Caco-2 (cell line): ENCODE measurements at regions of chr4 and their contacts with region 1.

Region 1: DNA sequence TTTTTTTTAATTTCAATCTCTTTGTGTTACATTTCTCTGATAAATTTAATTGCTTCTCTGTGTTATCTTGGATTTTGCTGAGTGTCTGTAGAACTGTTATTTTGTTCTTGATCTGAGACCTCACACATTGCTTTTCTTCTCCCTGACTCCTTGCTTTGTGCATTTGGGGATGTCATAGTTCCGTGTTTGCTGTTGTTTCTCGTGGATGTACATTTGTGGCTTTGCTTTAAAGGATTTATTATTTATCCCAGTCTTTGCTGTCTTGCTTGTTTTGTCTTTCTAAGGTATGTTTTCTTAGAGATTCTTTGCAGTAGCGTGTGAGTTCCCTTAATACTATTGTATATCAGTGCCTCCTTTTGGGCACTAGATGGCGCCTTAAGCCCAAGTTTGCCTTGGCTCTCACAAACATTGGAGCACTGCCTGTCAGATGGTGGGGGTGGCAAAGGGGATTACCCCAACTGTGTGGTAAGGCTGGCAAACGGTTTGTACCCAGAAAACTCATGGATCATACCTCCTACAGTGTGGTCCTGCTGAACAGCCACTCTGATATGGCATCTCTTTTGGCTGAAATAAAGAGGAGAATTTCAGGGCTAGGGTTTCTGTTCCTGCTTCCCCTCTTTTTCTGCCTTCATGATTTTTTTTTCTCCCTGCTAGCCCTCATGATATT is 96.4 kb downstream of the PGRMC2 start:
- DNase-seq: peak; percentile 59 to 65
- H3K4me3 ChIP-seq: no peak overlapping the region
- H3K4me3 Mint-ChIP-seq: no peak overlapping the region
- H3K27ac Mint-ChIP-seq: no peak overlapping the region
- H3K4me1 ChIP-seq: 0 out of 2 replicates have a peak, but pooled peaks cover 11% of the 10 kb centered on the region
- H3K4me1 Mint-ChIP-seq: peaks cover 15% of the 10 kb centered on the region
- H3K27me3 ChIP-seq: no peaks in the 10 kb centered on the region
- H3K27me3 Mint-ChIP-seq: no peaks in the 10 kb centered on the region
- CTCF ChIP-seq: peak; percentile 73 to 77

Region 2: DNA sequence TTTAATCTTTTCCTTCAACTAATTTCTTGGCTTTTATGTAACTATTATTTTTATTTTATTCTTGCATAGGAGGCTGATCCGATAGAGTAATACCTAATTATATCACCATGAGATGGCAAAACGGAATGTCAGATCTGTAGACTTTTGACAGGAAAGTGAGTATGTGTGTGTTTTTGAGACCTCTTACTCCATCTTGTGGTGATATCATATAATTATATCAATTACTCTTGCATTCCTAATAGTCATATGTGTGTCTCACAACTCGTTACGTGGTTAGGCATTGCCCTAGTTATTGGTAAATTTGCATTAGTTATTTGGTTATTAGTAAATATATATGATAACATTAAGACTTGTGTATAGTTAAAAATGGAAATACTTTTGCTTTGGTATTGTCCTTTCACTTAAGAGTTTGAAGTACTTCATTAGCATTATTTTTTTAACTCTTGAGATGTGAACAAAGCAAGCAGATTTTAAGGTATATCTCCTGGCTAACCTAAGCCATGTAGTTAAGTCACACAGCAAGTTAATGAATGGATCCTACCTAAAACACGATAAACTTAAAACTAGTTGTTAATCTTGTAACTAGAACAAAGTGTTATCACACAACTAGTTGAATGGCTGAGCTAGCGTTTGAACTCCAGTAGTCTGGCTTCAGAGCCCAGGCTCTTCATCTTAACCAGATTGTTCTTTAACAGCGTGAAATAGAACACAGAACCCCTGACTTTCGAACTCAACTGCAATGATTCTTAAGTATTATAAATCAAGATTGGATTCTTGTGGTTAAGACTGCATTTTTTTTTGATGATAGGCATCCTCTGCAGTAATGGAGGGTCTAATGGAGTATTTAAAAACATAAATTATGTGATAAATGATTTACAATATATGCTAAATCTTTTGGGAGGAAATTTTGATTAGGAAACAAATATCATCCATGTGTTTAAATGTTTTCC is 29.3 kb after region 1 on chr4:
- CTCF ChIA-PET with region 1: no interaction called
- POLR2A ChIA-PET with region 1: no interaction called
- intact Hi-C with region 1: loop called (anchors 2 kb)
- DNase-seq: no peak
- H3K4me3 ChIP-seq: no peak overlapping the region
- H3K4me3 Mint-ChIP-seq: no peak overlapping the region
- H3K27ac Mint-ChIP-seq: no peak overlapping the region
- H3K4me1 ChIP-seq: no peaks in the 10 kb centered on the region
- H3K4me1 Mint-ChIP-seq: no peaks in the 10 kb centered on the region
- H3K27me3 ChIP-seq: no peaks in the 10 kb centered on the region
- H3K27me3 Mint-ChIP-seq: no peaks in the 10 kb centered on the region
- CTCF ChIP-seq: no peak

Region 3: GRCh38 chr4:128282516-128282915 is 91.3 kb after region 1 on chr4:
- CTCF ChIA-PET with region 1: no interaction called
- POLR2A ChIA-PET with region 1: no interaction called
- intact Hi-C with region 1: no loop called
- DNase-seq: no peak
- H3K4me3 ChIP-seq: no peak overlapping the region
- H3K4me3 Mint-ChIP-seq: no peak overlapping the region
- H3K27ac Mint-ChIP-seq: no peak overlapping the region
- H3K4me1 ChIP-seq: peaks cover 26% of the 10 kb centered on the region
- H3K4me1 Mint-ChIP-seq: peaks cover 20% of the 10 kb centered on the region
- H3K27me3 ChIP-seq: no peaks in the 10 kb centered on the region
- H3K27me3 Mint-ChIP-seq: no peaks in the 10 kb centered on the region
- CTCF ChIP-seq: no peak

Region 4: GRCh38 chr4:128341634-128342033 is 150.4 kb after region 1 on chr4:
- CTCF ChIA-PET with region 1: no interaction called
- POLR2A ChIA-PET with region 1: no interaction called
- intact Hi-C with region 1: loop called (anchors 1 kb)
- DNase-seq: no peak
- H3K4me3 ChIP-seq: no peak overlapping the region
- H3K4me3 Mint-ChIP-seq: no peak overlapping the region
- H3K27ac Mint-ChIP-seq: no peak overlapping the region
- H3K4me1 ChIP-seq: no peaks in the 10 kb centered on the region
- H3K4me1 Mint-ChIP-seq: no peaks in the 10 kb centered on the region
- H3K27me3 ChIP-seq: no peaks in the 10 kb centered on the region
- H3K27me3 Mint-ChIP-seq: no peaks in the 10 kb centered on the region
- CTCF ChIP-seq: peak in 1 of 2 experiments; percentile 4

Region 5: DNA sequence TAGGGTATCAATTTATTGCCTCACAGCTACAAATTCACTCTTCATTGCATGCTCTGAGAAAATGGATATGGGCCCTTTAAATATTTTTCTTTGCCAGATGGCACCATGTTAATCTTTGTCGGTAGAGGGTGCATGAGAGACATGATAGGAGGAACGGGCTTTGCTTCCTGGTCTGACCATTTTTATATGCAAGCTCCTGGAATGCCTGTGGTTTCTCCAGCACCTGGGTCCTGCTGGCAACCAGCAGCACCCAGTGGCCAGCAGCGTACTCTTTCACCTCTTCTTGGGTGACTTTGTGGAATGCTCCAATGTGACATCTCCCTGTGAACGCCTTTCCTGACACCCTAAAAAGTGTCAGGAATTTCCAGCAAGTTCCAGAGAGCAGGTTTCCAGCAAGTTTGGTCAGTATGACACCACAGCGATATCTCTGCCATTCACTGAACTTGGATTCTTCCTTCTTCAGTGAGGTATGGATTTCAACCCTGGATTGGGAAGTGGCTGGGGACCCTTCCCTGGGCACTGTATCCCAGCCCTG is 236.7 kb after region 1 on chr4:
- CTCF ChIA-PET with region 1: no interaction called
- POLR2A ChIA-PET with region 1: interaction called, 6 read pairs
- intact Hi-C with region 1: loop called (anchors 1 kb)
- DNase-seq: peak; percentile 72 to 82
- H3K4me3 ChIP-seq: no peak overlapping the region
- H3K4me3 Mint-ChIP-seq: no peak overlapping the region
- H3K27ac Mint-ChIP-seq: peak overlapping the region; percentile 67
- H3K4me1 ChIP-seq: peaks cover 20% of the 10 kb centered on the region
- H3K4me1 Mint-ChIP-seq: peaks cover 8% of the 10 kb centered on the region
- H3K27me3 ChIP-seq: no peaks in the 10 kb centered on the region
- H3K27me3 Mint-ChIP-seq: no peaks in the 10 kb centered on the region
- CTCF ChIP-seq: peak; percentile 25 to 39

Region 6: GRCh38 chr4:128488055-128488705 is 296.9 kb after region 1 on chr4:
- CTCF ChIA-PET with region 1: no interaction called
- POLR2A ChIA-PET with region 1: no interaction called
- intact Hi-C with region 1: no loop called
- DNase-seq: no peak
- H3K4me3 ChIP-seq: no peak overlapping the region
- H3K4me3 Mint-ChIP-seq: no peak overlapping the region
- H3K27ac Mint-ChIP-seq: no peak overlapping the region
- H3K4me1 ChIP-seq: peaks cover 13% of the 10 kb centered on the region
- H3K4me1 Mint-ChIP-seq: peaks cover 13% of the 10 kb centered on the region
- H3K27me3 ChIP-seq: no peaks in the 10 kb centered on the region
- H3K27me3 Mint-ChIP-seq: no peaks in the 10 kb centered on the region
- CTCF ChIP-seq: no peak

Region 7: DNA sequence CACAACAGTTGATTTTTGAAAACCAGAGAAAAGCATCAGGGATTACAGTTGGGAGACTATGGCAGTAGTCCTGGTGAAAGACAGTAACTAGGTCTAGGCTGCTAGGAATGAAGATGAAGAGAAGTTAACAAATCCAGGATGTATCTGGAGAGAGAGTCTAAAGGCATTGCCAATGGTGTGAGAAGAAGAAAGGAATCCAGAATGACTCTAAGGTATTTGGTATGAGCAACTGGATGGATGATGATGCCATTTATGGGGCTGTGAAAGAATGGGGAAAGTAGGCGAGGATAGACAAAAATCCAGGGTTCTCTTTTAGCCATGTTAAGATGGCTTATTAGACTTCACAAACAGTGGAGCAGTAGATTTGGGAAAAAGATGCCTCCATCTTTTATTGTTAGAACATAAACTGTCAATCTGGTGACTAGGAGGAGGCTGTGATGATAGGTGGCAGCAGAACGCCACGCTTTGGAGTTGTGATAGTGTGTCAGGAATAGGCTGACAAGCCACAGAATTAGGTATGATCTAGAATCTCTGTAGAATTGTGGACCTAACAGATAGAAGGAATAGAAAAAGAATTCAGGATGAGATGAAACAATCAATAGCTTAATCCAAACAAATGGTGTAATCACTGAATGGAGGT is 590.9 kb after region 1 on chr4:
- CTCF ChIA-PET with region 1: no interaction called
- POLR2A ChIA-PET with region 1: no interaction called
- intact Hi-C with region 1: loop called (anchors 10 kb)
- DNase-seq: peak; percentile 58 to 62
- H3K4me3 ChIP-seq: no peak overlapping the region
- H3K4me3 Mint-ChIP-seq: no peak overlapping the region
- H3K27ac Mint-ChIP-seq: no peak overlapping the region
- H3K4me1 ChIP-seq: peaks cover 3% of the 10 kb centered on the region
- H3K4me1 Mint-ChIP-seq: peaks cover 3% of the 10 kb centered on the region
- H3K27me3 ChIP-seq: no peaks in the 10 kb centered on the region
- H3K27me3 Mint-ChIP-seq: no peaks in the 10 kb centered on the region
- CTCF ChIP-seq: peak; percentile 41 to 45

Region 8: GRCh38 chr4:128863312-128864075 is 672.2 kb after region 1 on chr4:
- CTCF ChIA-PET with region 1: no interaction called
- POLR2A ChIA-PET with region 1: no interaction called
- intact Hi-C with region 1: loop called (anchors 1 kb)
- DNase-seq: peak; percentile 73 to 77
- H3K4me3 ChIP-seq: no peak overlapping the region
- H3K4me3 Mint-ChIP-seq: no peak overlapping the region
- H3K27ac Mint-ChIP-seq: peak overlapping the region; percentile 40
- H3K4me1 ChIP-seq: no peaks in the 10 kb centered on the region; the same call in 1 of the 2 replicates
- H3K4me1 Mint-ChIP-seq: peaks cover 23% of the 10 kb centered on the region
- H3K27me3 ChIP-seq: no peaks in the 10 kb centered on the region
- H3K27me3 Mint-ChIP-seq: no peaks in the 10 kb centered on the region
- CTCF ChIP-seq: peak; percentile 77 to 84